CD8-positive, alpha-beta memory T cell (primary cell): ENCODE measurements at regions of chr19 and their contacts with region 1.

Region 1: GRCh38 chr19:53792721-53793433 is 31.2 kb downstream of the NLRP12 start:
- DNase-seq: peak; percentile 34 to 78 (median 53)
- H3K4me3 ChIP-seq: no peak overlapping the region
- H3K4me3 Mint-ChIP-seq: no peak overlapping the region
- H3K27ac ChIP-seq: no peak overlapping the region
- H3K27ac Mint-ChIP-seq: peak overlapping the region in 1 of 8 donors; percentile 47
- H3K4me1 ChIP-seq: no peaks in the 10 kb centered on the region
- H3K4me1 Mint-ChIP-seq: peaks cover 0 to 2% (median 0%) of the 10 kb centered on the region in 3 donors
- H3K27me3 ChIP-seq: no peaks in the 10 kb centered on the region
- H3K27me3 Mint-ChIP-seq: peaks cover 0 to 2% of the 10 kb centered on the region in 2 donors

Region 2: GRCh38 chr19:54023191-54023590 is 230.3 kb after region 1 on chr19:
- CTCF ChIA-PET with region 1: interaction called, 14 read pairs
- POLR2A ChIA-PET with region 1: no interaction called
- DNase-seq: no peak
- H3K4me3 ChIP-seq: no peak overlapping the region
- H3K4me3 Mint-ChIP-seq: no peak overlapping the region
- H3K27ac ChIP-seq: no peak overlapping the region
- H3K27ac Mint-ChIP-seq: no peak overlapping the region
- H3K4me1 ChIP-seq: no peaks in the 10 kb centered on the region
- H3K4me1 Mint-ChIP-seq: peaks cover 0 to 6% (median 2%) of the 10 kb centered on the region in 3 donors
- H3K27me3 ChIP-seq: peaks cover 3% of the 10 kb centered on the region
- H3K27me3 Mint-ChIP-seq: peaks cover 12 to 30% of the 10 kb centered on the region in 2 donors